GM13976 (cell line): ENCODE measurements at regions of chr9 and their contacts with region 1.

Region 1: GRCh38 chr9:76658535-76659231 is 105.6 kb upstream of the PCA3 start:
- DNase-seq: peak; percentile 62
- CTCF ChIP-seq: peak; percentile 45

Region 2: DNA sequence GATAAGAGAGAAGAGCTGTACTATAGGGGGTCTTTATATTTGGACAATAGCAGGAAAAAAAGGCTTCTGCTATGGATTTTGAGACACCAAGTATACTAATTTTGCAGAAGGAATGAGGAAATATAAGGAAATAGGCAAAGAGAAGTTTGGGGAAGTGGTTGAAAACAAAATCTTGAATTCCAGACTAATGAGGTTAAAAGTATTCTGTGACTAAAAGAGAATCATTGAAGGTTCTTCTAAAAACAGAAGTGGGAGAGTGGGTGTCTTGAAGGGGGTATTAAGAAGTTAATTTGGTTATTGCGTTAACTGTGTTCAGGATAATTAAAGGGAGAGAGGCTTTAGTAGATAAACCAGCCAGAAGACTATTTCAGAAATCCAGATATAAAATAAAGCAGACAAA is 413.2 kb before region 1 on chr9:
- in situ Hi-C with region 1: no loop called
- DNase-seq: no peak
- CTCF ChIP-seq: no peak

Region 3: DNA sequence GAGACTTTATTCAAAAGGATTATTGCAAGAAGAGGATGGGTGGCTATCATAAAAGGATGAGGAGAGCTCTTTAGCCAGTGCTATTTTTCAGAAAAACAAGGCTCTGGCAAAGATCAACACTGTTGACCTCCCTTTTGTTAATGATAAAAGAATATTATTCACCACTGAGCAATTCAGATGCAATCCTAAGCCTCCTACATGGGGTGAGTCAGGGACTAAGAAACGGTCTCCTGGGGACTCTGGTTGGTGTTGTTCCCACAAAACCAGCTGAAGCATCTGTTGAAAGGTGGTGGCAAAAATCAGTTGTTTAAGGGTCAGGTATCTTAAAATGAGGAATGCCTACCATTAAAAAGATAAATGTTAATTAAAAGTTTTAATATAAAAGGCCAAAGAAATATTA is 207.4 kb before region 1 on chr9:
- in situ Hi-C with region 1: loop called (anchors 5 kb)
- DNase-seq: no peak
- CTCF ChIP-seq: no peak

Region 4: DNA sequence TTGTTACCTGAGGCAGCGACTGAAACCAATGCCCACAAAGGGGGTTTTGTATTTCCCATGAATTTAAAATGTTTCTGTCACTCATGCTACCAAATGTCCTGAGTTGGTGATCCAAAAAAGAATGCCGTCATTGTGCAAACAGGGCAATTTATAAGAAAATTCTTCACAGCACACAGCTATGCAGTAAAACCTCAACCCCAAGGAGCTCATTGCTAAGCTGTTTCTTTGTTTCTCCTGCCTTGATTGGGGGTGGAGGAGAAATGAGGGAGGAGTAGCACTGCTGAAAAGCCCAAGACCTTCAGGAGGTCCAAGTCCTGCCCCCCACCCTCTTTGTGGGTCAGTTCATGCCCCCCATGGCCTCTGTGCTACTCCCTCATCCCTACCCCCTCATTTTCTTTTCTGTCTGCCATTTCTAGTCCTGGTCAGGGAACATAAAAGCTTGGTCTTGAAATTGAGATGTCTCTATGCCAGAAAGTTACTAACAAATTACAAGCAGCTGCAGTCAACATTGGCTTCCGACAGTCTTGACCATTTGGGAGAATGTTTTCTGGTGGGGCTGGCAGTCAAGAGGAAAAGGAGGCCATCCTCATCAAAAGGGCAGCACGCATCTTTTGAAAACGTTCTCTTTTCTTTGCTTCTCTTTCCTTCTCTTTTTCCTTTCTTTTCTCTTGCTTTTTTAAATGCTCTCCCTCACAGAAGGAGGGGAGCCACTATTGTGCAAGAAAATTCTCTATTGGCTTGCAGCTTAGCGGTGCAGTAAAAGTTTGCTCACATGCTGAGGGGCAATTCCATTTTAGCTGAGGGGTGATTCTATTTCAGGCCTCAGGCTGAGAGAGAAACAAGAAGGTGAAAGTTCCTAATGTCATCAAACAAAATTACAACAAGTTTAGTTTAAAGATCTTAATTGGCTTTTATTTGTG is 66.3 kb before region 1 on chr9:
- in situ Hi-C with region 1: loop called (anchors 10 kb)
- DNase-seq: no peak
- CTCF ChIP-seq: no peak